CD4-positive, alpha-beta memory T cell (primary cell): ENCODE measurements at regions of chr16 and their contacts with region 1.

Region 1: DNA sequence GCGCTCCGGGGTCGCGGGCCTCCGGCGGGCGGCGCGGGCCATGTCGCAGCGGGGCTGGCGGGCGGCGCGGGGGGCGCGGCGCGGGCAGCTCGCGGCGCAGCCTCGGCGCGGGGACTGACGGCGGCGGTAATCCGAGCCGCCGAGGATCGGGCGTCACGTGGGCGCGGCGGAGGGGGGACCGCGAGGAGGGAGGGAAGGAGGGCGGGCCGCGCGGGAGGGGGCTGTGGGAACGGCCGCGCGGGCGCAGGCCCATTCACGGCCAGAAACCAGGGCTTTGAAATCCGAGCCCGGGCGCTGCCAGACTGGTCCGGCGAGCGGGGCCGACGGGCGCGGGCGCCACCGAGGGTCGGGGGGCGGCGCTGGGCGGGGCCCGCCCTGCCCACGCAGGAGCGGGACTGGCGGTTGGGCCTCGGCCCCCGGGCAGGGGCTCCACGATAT is at the start of gene MTSS2:
- DNase-seq: peak in 1 of 5 donors; percentile 27
- H3K4me3 ChIP-seq: no peak within 1 kb of the TSS
- H3K4me3 Mint-ChIP-seq: peak within 1 kb of the TSS; percentile 20 to 70 (median 62)
- H3K27ac ChIP-seq: no peak within 1 kb of the TSS
- H3K27ac Mint-ChIP-seq: peak within 1 kb of the TSS in 1 of 7 donors; percentile 46
- H3K4me1 ChIP-seq: peaks cover 7% of the 10 kb centered on the region
- H3K4me1 Mint-ChIP-seq: peaks cover 0 to 8% (median 3%) of the 10 kb centered on the region in 4 donors
- H3K27me3 ChIP-seq: peaks cover 5% of the 10 kb centered on the region
- H3K27me3 Mint-ChIP-seq: peaks cover 13 to 16% of the 10 kb centered on the region in 2 donors
- total RNA-seq, gene MTSS2: 1.8 to 1.9 TPM

Region 2: GRCh38 chr16:70737377-70738082 is 51.6 kb after region 1 on chr16:
- CTCF ChIA-PET with region 1: no interaction called
- POLR2A ChIA-PET with region 1: no interaction called
- intact Hi-C with region 1: loop called (anchors 5 kb)
- DNase-seq: peak; percentile 43 to 72 (median 63)
- H3K4me3 ChIP-seq: no peak overlapping the region
- H3K4me3 Mint-ChIP-seq: peak overlapping the region in 7 of 8 donors; percentile 35 to 79 (median 55)
- H3K27ac ChIP-seq: peak overlapping the region; percentile 5
- H3K27ac Mint-ChIP-seq: peak overlapping the region; percentile 81 to 97 (median 92)
- H3K4me1 ChIP-seq: peaks cover 22% of the 10 kb centered on the region
- H3K4me1 Mint-ChIP-seq: peaks cover 15 to 30% (median 21%) of the 10 kb centered on the region in 4 donors
- H3K27me3 ChIP-seq: no peaks in the 10 kb centered on the region
- H3K27me3 Mint-ChIP-seq: no peaks in the 10 kb centered on the region